ENCODE measurements at regions of chr3 and their contacts with region 1.

Region 1: GRCh38 chr3:9731206-9732079 is at the start of gene BRPF1:
- DNase-seq: peak; percentile 98 to 100
- H3K4me3 ChIP-seq: peak within 1 kb of the TSS; percentile 99 to 100
- H3K27ac ChIP-seq: peak within 1 kb of the TSS; percentile 98
- H3K4me1 ChIP-seq: peaks cover 15 to 24% of the 10 kb centered on the region in 2 donors
- H3K27me3 ChIP-seq: no peaks in the 10 kb centered on the region
- CTCF ChIP-seq: peak in 1 of 3 experiments; percentile 7
- total RNA-seq, gene BRPF1: 18.6 TPM

Region 2: GRCh38 chr3:9704347-9705322 is 26.8 kb before region 1 on chr3:
- intact Hi-C with region 1: no loop called
- DNase-seq: no peak
- H3K4me3 ChIP-seq: peak overlapping the region; percentile 45 to 47
- H3K27ac ChIP-seq: no peak overlapping the region
- H3K4me1 ChIP-seq: peaks cover 0 to 9% of the 10 kb centered on the region in 2 donors
- H3K27me3 ChIP-seq: peaks cover 3% of the 10 kb centered on the region
- CTCF ChIP-seq: no peak

Region 3: DNA sequence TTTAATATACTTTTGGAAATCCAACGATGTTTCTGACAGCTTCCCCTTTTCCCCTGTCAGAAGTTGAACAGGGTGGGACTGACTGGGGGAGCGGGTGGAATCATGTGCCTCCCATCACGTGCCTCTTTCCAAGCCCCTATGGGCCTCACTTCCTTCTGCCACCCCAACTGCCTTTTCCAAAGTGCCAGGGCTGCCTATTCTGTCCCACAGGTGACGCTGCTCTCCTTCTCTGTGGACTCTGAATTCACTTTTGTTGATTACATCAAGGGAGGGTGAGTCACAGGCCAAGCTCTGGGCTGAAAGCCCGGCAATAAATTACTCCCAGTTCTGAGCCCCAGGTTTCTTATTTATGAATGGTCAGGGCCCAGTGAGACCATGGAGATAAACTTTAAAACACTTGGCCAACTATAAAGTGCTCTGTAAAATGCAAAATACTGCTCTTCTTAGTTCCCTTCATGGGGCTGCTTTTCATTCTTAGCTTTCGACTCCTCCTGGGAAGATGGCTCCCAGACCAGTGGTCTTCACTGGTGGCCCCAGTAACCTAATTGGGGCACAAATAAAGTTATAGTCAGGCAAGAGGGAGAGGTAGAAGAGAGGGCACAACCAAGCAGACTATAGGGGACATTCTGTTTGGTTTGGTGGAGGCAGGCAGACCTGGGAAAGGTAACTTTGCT is 15.5 kb before region 1 on chr3:
- intact Hi-C with region 1: loop called (anchors 1 kb)
- DNase-seq: peak; percentile 66 to 93
- H3K4me3 ChIP-seq: no peak overlapping the region
- H3K27ac ChIP-seq: peak overlapping the region; percentile 73 to 86
- H3K4me1 ChIP-seq: peaks cover 3 to 4% of the 10 kb centered on the region in 2 donors
- H3K27me3 ChIP-seq: no peaks in the 10 kb centered on the region
- CTCF ChIP-seq: peak; percentile 85 to 89 (median 87)

Region 4: GRCh38 chr3:9792405-9793160 is 61.1 kb after region 1 on chr3 and contains the starts of genes ARPC4 and TADA3:
- intact Hi-C with region 1: loop called (anchors 1 kb)
- DNase-seq: peak; percentile 71 to 96
- H3K4me3 ChIP-seq: peak within 1 kb of the TSS; percentile 75 to 84
- H3K27ac ChIP-seq: peak within 1 kb of the TSS; percentile 95 to 98
- H3K4me1 ChIP-seq: peaks cover 6 to 22% of the 10 kb centered on the region in 2 donors
- H3K27me3 ChIP-seq: no peaks in the 10 kb centered on the region
- CTCF ChIP-seq: peak in 2 of 3 experiments; percentile 7 to 28
- total RNA-seq, gene ARPC4: 160 TPM
- total RNA-seq, gene TADA3: 106 TPM

Region 5: GRCh38 chr3:9915254-9916141 is 184.1 kb after region 1 on chr3:
- intact Hi-C with region 1: loop called (anchors 5 kb)
- DNase-seq: peak in 1 of 2 donors; percentile 85
- H3K4me3 ChIP-seq: peak overlapping the region; percentile 62 to 89
- H3K27ac ChIP-seq: peak overlapping the region; percentile 79 to 86
- H3K4me1 ChIP-seq: peaks cover 22 to 32% of the 10 kb centered on the region in 2 donors
- H3K27me3 ChIP-seq: no peaks in the 10 kb centered on the region
- CTCF ChIP-seq: peak in 2 of 3 experiments; percentile 32 to 56

Region 6: GRCh38 chr3:10010486-10011465 is 279.3 kb after region 1 on chr3:
- intact Hi-C with region 1: loop called (anchors 5 kb)
- DNase-seq: peak; percentile 90 to 98
- H3K4me3 ChIP-seq: peak overlapping the region; percentile 60 to 81
- H3K27ac ChIP-seq: peak overlapping the region; percentile 52 to 78
- H3K4me1 ChIP-seq: peaks cover 9 to 33% of the 10 kb centered on the region in 2 donors
- H3K27me3 ChIP-seq: no peaks in the 10 kb centered on the region
- CTCF ChIP-seq: peak in 1 of 3 experiments; percentile 4

Measured in ascending aorta (tissue), 2 donors.